ENCODE measurements at regions of chr1 and their contacts with region 1.

Region 1: DNA sequence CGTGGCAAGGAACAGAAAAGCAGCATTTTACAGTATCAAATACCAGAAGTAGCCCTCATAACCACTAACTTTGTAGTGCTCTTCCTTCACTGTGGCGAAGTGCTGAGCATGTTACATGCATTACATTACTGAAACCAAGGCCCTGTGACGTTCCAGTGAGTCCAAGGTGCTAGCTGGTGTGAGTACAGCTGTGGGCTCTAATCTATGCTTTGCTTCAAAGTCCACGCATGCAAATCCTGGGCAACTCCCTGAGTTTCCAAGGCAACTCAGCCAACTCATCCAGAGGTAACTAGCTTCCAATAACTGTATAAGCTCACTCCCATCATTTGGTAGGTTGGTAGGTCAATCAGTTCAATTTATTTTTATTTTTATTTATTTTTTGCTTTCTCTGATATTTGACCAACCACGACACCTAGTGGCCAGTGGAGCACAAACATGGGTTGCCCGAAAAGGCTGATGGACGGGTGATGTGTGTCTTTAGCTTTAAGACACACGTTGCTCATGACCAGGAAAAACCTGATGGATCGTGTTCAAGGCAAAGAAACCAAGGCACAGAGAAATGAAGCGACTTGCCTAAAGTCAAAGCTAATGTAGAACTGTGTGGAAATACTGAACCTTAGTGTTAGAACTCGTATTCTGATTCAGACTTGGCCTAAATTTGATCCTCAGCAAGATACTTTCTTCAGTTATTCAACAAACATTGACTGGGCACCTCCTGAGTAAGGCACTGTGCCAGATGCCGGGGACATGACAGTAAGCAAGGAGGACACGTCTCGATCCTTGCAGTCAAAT is 73.0 kb downstream of the GNG12 start:
- DNase-seq: peak; percentile 56 to 74 (median 66)
- H3K4me3 ChIP-seq: no peak overlapping the region
- H3K27ac ChIP-seq: no peak overlapping the region
- H3K4me1 ChIP-seq: peaks cover 0 to 2% (median 0%) of the 10 kb centered on the region in 4 experiments
- H3K27me3 ChIP-seq: no peaks in the 10 kb centered on the region

Region 2: DNA sequence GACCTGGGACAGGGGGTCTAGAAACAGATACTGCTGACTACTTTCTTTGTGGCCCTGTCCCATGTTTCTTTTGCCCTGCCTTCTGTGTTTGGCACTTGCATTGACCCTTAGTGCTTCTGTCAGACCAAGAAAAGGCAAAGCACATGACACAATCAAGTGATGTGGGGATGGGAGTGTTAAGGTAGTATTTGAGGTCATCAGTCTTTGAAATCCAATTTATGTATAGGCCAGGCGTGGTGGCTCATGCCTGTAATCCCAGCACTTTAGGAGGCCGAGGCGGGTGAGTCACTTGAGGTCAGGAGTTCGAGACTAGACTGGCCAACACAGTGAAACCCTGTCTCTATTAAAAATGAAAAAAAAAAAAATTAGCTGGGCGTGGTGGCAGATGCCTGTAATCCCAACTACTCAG is 356.0 kb before region 1 on chr1:
- CTCF ChIA-PET with region 1: no interaction called
- POLR2A ChIA-PET with region 1: no interaction called
- DNase-seq: no peak
- H3K4me3 ChIP-seq: no peak overlapping the region
- H3K27ac ChIP-seq: no peak overlapping the region
- H3K4me1 ChIP-seq: no peaks in the 10 kb centered on the region
- H3K27me3 ChIP-seq: no peaks in the 10 kb centered on the region

Region 3: DNA sequence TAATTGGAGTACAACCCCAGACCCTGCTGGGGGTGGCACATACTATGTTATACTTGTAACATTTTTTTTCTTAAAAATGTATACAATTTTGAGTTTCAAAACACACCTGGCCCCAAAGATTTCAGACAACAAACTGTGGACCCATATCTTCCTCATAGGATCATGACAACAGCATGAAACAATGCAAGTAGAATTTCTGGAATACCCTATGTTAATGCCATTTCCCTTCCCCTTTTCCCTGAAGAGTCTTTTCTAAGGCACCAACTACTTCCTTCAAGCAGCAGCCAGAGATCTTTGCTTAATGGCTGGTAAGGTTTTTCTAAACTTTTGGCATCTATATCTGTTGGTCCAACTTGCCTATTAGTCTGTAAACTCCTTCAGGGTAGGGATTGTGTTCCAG is 230.2 kb before region 1 on chr1:
- CTCF ChIA-PET with region 1: interaction called, 291 read pairs
- POLR2A ChIA-PET with region 1: no interaction called
- DNase-seq: no peak
- H3K4me3 ChIP-seq: no peak overlapping the region
- H3K27ac ChIP-seq: no peak overlapping the region
- H3K4me1 ChIP-seq: peaks cover 0 to 5% (median under 1%) of the 10 kb centered on the region in 4 experiments
- H3K27me3 ChIP-seq: no peaks in the 10 kb centered on the region

Region 4: DNA sequence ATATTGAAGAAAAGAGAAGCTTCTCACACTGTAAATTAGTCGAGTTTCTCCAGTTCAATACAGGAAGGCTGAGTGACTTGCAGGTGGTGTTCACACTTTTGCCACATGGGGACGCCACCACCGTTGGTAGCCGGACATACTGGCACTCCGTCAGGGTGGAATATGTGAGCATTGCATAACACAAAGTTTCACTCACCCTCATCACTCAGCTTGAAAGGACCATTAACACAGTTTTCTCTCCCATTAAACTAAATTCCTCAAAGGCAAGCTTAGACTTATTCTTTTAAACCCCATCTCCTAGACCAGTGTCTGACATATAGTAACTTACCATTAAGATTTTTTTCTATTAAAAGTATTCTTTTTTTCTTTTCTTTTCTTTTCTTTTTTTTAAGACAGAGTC is 224.8 kb before region 1 on chr1:
- CTCF ChIA-PET with region 1: interaction called, 291 read pairs
- POLR2A ChIA-PET with region 1: no interaction called
- DNase-seq: peak; percentile 76 to 90 (median 86)
- H3K4me3 ChIP-seq: no peak overlapping the region
- H3K27ac ChIP-seq: no peak overlapping the region
- H3K4me1 ChIP-seq: peaks cover 0 to 4% (median 0%) of the 10 kb centered on the region in 4 experiments
- H3K27me3 ChIP-seq: no peaks in the 10 kb centered on the region

Region 5: DNA sequence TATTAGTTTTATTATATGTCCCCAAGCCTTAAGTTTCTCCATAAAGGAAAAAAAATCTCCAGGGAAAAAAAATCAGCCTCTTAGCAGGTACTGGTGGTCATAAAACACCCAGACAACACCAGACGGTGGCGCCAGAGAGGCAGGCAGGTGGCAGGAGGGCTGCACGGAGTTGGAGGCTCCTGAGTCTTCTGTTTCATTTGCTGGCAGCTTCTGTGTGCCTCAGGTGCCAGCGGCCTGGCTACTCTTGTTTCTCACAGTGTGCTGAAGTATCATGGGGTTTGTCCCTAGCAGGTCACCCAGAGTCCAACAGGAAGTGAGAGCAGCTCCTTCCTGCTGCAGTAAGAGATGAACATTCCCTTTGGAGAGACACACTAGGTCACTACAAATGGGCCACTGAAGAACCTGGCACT is 198.5 kb before region 1 on chr1:
- CTCF ChIA-PET with region 1: interaction called, 148 read pairs
- POLR2A ChIA-PET with region 1: no interaction called
- DNase-seq: peak; percentile 77 to 85 (median 83)
- H3K4me3 ChIP-seq: no peak overlapping the region
- H3K27ac ChIP-seq: no peak overlapping the region
- H3K4me1 ChIP-seq: peaks cover 0 to 32% (median 22%) of the 10 kb centered on the region in 4 experiments
- H3K27me3 ChIP-seq: no peaks in the 10 kb centered on the region

Region 6: DNA sequence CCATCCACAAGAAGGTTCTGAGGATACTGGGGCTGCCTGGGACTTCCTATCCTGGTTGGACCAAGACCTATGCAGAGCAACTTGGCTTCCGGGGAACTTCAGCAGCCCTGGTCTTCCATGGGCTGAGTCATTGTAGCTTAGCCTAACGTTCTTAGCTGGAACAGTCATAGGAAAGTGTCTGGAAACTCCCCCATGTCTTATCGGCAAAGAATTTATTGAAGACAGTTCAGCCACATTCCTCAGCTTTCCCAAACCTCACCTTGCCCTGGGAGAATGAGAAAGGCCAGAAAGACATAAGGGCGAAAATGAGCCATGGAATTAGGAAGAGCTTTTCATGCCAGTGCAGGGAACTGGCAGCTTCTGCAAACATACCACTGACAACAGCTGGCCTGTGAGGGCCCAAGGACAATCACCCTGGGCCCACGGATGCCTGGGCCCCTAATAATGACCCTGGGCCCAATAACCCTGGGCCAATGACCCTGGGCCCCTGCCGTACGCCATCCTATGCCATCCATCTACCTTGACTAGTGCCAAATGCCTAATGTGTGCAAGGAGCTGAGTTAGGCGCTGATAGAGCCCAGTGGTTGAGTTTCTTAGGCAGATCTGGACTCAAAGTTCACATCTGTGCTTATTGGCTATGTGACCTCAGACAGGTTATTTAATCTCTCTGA is 189.6 kb before region 1 on chr1:
- CTCF ChIA-PET with region 1: interaction called, 21 read pairs
- POLR2A ChIA-PET with region 1: no interaction called
- DNase-seq: no peak
- H3K4me3 ChIP-seq: no peak overlapping the region
- H3K27ac ChIP-seq: no peak overlapping the region
- H3K4me1 ChIP-seq: no peaks in the 10 kb centered on the region
- H3K27me3 ChIP-seq: no peaks in the 10 kb centered on the region

Region 7: DNA sequence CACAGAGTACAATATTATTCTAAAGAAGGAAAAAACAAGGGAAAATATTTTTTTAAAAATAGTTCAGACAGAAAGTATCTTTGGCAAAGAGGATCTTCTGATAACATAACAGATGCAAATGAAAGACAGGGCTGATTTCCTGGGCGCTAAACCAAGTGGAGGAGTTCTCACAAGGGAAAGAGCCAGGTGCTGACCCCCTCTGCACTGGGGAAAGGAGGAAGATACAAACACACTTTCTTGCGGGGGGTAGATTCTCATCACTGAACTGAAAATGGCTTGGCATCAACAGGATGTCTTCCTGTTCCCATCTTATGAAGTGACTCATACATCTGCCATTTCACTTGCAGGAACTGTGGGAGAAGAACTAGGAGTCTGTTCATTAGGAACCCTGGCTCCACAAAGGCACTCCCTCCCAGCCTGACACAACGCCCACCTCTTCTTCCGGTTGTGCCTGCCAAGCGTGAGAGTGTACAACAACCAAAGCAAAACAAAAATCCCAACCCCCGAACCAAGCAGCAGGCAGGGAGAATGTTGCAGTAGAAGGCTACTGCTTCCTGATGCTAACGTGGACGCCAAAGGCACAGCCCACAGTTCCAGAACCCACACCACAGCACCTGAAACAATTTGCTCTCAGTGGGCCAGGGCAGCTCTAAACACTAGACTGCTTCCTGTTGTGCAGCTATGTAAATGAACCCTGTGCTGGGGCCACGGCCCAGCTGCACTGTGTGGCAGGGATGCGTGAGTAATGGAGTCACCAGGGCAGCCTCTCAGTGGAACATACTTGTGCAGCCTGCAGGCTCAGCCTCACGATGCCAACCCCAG is 24.2 kb before region 1 on chr1:
- CTCF ChIA-PET with region 1: interaction called, 27 read pairs
- POLR2A ChIA-PET with region 1: no interaction called
- DNase-seq: peak in 2 of 3 donors; percentile 51 to 67
- H3K4me3 ChIP-seq: peak overlapping the region in 4 of 7 experiments; percentile 19 to 58 (median 24)
- H3K27ac ChIP-seq: peak overlapping the region in 1 of 2 experiments; percentile 4
- H3K4me1 ChIP-seq: peaks cover 9 to 68% (median 45%) of the 10 kb centered on the region in 4 experiments
- H3K27me3 ChIP-seq: no peaks in the 10 kb centered on the region

Region 8: DNA sequence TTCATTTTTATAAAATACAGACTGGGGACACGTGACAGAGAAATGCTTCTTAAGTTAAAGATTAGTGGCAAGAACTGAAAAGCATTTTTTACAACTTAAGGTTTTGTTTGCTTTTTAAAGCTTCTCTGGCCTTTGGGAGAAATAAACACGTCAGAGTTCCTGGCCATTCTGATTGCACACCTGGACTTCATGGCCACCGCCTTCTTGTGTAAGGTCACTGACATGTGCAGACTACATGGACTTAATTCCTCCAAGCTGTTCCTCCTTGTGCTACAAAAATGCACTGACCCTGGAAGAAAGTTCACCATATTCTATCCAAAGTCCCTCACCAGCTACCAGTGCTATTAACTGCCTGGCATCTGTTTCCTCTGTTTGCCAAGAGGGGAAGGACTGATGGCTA is 19.1 kb before region 1 on chr1:
- CTCF ChIA-PET with region 1: interaction called, 27 read pairs
- POLR2A ChIA-PET with region 1: no interaction called
- DNase-seq: peak in 2 of 3 donors; percentile 41 to 55
- H3K4me3 ChIP-seq: no peak overlapping the region
- H3K27ac ChIP-seq: no peak overlapping the region
- H3K4me1 ChIP-seq: peaks cover 5 to 43% (median 14%) of the 10 kb centered on the region in 4 experiments
- H3K27me3 ChIP-seq: no peaks in the 10 kb centered on the region